Activated naive CD4-positive, alpha-beta T cell treated with anti-CD3 and anti-CD28 coated beads for 36 hours (primary cell): ENCODE measurements at regions of chr13 and their contacts with region 1.

Region 1: GRCh38 chr13:41465241-41465847 is 8.0 kb downstream of the RGCC start:
- DNase-seq: peak; percentile 97
- H3K4me3 Mint-ChIP-seq: peak overlapping the region; percentile 76
- H3K27ac Mint-ChIP-seq: peak overlapping the region; percentile 93
- H3K4me1 Mint-ChIP-seq: peaks cover 89% of the 10 kb centered on the region
- H3K27me3 Mint-ChIP-seq: no peaks in the 10 kb centered on the region

Region 2: GRCh38 chr13:40974460-40975407 is 490.6 kb before region 1 on chr13:
- CTCF ChIA-PET with region 1: no interaction called
- intact Hi-C with region 1: loop called (anchors 2 kb)
- DNase-seq: peak; percentile 63
- H3K4me3 Mint-ChIP-seq: peak overlapping the region; percentile 36
- H3K27ac Mint-ChIP-seq: peak overlapping the region; percentile 94
- H3K4me1 Mint-ChIP-seq: peaks cover 83% of the 10 kb centered on the region
- H3K27me3 Mint-ChIP-seq: no peaks in the 10 kb centered on the region

Region 3: DNA sequence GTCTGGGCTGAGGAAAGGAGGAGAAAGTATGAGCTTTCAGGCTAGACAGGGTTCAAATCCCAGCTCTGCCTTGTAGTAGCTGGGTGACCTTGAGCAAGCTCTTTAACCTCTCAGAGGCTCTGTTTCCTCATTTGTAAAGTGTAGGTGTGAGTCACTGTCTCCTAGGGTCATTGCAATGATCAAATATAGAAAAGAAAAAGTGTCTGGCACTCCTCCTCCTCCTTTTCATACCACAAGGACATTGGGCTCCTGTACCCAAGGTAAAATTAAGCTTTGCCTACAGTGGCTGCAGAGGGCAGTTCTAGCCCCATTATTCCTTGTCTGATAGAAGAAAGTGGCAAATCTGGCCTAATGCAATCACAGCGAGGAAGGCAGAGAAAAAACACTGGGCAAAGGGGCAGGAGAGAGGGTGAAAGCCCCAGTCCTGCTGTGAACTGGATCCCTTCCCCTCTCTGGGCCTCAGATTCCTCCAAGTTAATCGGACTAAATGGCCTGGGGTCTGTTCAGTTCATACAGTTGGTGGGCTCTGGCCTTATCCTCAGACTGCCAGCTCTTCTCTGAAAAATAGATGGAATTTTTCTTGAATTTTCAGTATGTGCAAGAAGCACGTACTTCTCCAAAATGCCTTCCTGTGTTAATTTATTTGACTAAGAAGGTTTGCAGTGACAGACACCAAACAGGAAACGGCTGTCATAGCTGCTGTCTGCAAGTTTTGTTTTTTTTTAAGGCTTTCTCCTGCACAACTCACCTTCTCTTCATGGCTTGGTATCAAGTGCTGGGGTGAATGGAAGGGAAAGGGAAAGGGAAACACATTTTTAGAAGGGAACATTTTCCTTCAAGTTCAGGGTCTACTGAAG is 27.3 kb after region 1 on chr13:
- CTCF ChIA-PET with region 1: interaction called, 67 read pairs
- intact Hi-C with region 1: loop called (anchors 1 kb)
- DNase-seq: peak; percentile 62
- H3K4me3 Mint-ChIP-seq: peak overlapping the region; percentile 45
- H3K27ac Mint-ChIP-seq: peak overlapping the region; percentile 95
- H3K4me1 Mint-ChIP-seq: peaks cover 91% of the 10 kb centered on the region
- H3K27me3 Mint-ChIP-seq: no peaks in the 10 kb centered on the region

Region 4: GRCh38 chr13:41502673-41503072 is 37.3 kb after region 1 on chr13:
- CTCF ChIA-PET with region 1: interaction called, 38 read pairs
- intact Hi-C with region 1: loop called (anchors 1 kb)
- DNase-seq: peak; percentile 53
- H3K4me3 Mint-ChIP-seq: no peak overlapping the region
- H3K27ac Mint-ChIP-seq: no peak overlapping the region
- H3K4me1 Mint-ChIP-seq: peaks cover 65% of the 10 kb centered on the region
- H3K27me3 Mint-ChIP-seq: no peaks in the 10 kb centered on the region

Region 5: DNA sequence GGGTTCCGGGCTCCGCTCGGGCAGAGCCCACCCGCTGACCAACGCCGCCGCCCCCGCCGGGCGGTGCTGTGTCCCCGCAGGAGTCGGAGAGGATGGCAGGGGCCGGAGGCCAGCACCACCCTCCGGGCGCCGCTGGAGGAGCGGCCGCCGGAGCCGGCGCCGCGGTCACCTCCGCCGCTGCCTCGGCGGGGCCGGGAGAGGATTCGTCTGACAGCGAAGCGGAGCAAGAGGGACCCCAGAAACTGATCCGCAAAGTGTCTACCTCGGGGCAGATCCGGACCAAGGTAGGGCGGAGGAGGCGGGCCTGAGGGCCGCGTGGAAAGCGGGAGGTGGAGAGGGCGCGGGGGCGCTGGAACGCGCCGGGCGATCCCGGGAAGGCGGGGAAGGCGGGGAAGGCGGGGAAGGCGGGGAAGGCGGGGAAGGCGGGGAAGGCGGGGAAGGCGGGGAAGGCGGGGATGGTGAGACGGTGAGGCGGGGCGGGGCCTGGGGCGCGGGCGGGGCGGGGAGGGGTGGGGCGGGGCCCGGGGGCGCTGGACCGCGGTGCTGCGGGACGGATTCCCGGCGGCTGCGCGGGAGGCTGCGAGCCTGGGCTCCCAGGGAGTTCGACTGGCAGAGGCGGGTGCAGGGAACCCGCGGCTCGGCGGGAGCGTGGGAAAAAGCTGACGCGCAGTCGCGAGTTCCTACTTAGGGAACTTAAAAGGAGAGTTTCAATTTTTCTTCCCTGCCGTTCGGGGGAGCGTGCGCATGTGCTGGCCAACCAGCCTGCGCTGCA is 583.5 kb after region 1 on chr13:
- CTCF ChIA-PET with region 1: no interaction called
- intact Hi-C with region 1: loop called (anchors 2 kb)
- DNase-seq: peak; percentile 71
- H3K4me3 Mint-ChIP-seq: peak overlapping the region; percentile 89
- H3K27ac Mint-ChIP-seq: peak overlapping the region; percentile 78
- H3K4me1 Mint-ChIP-seq: peaks cover 21% of the 10 kb centered on the region
- H3K27me3 Mint-ChIP-seq: peaks cover 3% of the 10 kb centered on the region